Left lung (tissue), 14 donors: ENCODE measurements at regions of chr11 and their contacts with region 1.

Region 1: DNA sequence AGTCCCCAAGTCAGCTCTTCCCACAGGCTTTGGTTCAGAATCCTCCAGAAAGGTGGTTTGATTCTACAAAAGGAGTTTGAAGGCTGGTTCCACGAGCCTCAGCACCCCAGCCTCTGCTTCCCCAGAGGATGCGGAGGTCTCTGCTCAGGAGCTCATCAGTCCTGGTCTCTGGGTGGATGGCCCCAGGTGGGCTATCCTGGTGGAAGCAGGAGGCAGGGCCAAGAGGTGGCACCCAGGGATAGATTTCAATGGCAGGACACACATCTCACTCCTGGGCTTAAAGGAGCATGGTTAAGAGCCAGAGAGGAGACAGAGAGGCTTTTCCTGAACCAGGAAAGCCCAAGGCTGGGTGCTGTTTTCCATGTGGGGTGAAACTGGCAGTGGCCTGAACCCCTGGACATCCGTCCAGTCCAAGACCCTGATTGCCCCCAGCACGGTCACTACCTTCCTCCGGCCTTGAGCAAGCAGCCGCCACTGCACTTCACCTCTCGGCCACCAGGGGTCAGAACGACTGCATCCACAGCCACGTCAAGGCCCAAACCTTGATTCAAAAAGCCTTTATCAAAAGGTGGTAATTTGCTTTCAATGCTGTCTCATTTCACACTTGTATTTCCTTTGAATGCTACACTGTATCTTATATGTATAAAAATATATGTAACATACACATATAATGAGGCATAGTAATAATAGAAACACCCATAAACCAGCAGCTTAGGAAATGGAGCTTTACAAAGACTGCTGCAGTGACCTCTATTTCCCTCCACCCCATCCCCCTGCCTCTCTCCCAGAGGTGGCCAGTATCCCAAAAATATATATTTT is 19.3 kb upstream of the FXYD2 start:
- DNase-seq: peak; percentile 65 to 94 (median 76)
- ATAC-seq: peak; percentile 87
- H3K4me3 ChIP-seq: no peak overlapping the region
- H3K27ac ChIP-seq: no peak overlapping the region
- H3K4me1 ChIP-seq: peaks cover 0 to 36% of the 10 kb centered on the region in 2 donors
- H3K27me3 ChIP-seq: no peaks in the 10 kb centered on the region
- CTCF ChIP-seq: peak; percentile 99 to 100

Region 2: GRCh38 chr11:117807482-117808327 is 36.2 kb before region 1 on chr11:
- intact Hi-C with region 1: no loop called
- DNase-seq: peak in 3 of 4 donors; percentile 67 to 88 (median 86)
- ATAC-seq: peak; percentile 84
- H3K4me3 ChIP-seq: no peak overlapping the region
- H3K27ac ChIP-seq: no peak overlapping the region
- H3K4me1 ChIP-seq: peaks cover 0 to 43% of the 10 kb centered on the region in 2 donors
- H3K27me3 ChIP-seq: no peaks in the 10 kb centered on the region
- CTCF ChIP-seq: peak; percentile 91 to 94

Region 3: DNA sequence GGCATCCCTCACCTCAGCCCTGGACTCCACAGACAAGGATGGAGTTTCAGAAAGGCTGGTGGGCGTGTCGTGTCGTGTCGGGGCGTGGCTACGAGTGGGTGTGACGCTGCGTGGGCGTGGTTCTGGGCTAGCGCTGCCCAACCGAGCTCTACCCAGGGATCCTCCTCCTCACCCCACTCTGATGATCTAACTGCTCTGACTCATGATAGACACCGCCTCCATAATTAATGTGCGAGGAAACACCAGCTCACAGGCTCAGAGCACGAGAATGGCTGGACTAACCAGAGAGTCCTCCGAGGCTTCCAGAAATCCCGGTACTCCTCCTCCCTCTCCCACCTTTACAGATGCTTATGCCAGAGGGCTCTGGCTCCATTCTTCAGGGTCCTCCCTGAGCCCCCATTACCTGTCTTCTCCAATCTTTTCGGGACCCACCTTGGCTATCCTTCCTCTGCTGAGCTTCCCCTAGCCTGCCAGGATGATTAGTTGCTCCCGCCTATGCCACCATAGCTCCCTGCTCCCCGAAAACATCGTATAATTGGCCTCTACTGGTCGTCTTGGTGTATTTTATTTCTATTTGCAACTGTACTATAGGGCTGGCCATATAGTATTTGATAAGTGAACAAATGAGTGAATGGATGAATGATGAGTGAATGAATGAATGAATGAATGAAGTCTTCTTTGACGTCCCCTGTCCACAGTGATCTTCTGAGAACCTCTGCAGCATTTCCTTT is 63.5 kb after region 1 on chr11:
- intact Hi-C with region 1: loop called in 1 of 2 experiments (anchors 10 kb)
- DNase-seq: peak in 3 of 4 donors; percentile 59 to 89 (median 79)
- ATAC-seq: peak; percentile 93
- H3K4me3 ChIP-seq: no peak overlapping the region
- H3K27ac ChIP-seq: no peak overlapping the region
- H3K4me1 ChIP-seq: peaks cover 2 to 4% of the 10 kb centered on the region in 2 donors
- H3K27me3 ChIP-seq: no peaks in the 10 kb centered on the region
- CTCF ChIP-seq: no peak

Region 4: DNA sequence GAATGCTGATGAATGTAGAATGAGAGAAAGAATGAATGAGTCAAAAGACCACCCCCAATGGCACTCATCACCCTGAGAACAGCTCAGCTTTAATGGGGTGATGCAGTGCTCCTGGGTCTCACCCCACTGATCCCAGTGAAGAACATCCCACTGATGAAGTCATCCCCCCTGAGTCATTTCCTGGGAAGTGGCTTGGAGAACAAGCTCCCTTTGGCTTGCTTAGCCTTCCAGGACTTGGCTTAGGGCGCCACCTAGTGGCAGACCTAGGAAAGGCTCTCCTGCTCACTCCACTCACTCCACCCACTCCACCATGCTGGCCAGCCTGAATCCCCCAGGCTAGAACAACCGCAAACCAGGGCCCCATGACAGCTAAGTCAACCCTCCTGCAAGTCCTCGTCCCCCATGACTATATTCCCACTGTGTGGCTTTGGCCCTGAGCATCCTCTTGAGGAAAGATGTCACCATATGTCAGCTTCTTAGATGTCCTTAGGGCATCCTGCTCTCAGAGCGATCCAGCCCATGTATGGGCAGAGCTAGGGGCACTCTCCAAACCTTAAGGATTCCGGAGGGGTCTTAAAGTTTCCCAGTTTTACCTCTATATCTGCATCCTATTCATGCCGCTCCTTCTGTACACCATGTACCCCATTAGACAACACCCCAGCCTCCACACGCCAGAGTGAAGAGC is 103.1 kb after region 1 on chr11:
- intact Hi-C with region 1: loop called in 1 of 2 experiments (anchors 5 kb)
- DNase-seq: peak; percentile 85 to 94 (median 90)
- ATAC-seq: peak; percentile 97
- H3K4me3 ChIP-seq: no peak overlapping the region
- H3K27ac ChIP-seq: no peak overlapping the region
- H3K4me1 ChIP-seq: peaks cover 0 to 55% of the 10 kb centered on the region in 2 donors
- H3K27me3 ChIP-seq: no peaks in the 10 kb centered on the region
- CTCF ChIP-seq: peak; percentile 97 to 99

Region 5: DNA sequence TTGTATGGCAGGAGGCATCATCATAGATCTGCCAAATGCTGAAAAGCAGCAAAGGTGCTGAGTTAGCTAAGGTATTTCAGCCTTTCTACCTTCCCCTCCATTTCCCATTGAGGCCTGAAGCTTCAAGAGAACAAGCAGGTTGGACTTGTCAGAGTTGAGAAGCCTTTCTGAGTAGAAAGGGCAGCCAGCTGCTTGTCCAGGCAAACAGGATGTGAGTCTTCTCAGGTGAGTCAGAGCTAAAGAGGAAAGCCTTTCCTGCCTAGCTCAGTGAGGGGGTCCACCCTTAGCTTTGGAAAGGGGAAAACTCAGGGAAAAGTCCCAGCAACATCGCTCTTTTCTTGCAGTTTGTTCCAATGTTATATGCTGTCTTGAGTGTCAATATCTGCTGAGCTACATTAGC is 433.4 kb after region 1 on chr11:
- intact Hi-C with region 1: no loop called
- DNase-seq: no peak
- ATAC-seq: peak; percentile 63
- H3K4me3 ChIP-seq: no peak overlapping the region
- H3K27ac ChIP-seq: peak overlapping the region; percentile 19 to 50
- H3K4me1 ChIP-seq: peaks cover 10 to 24% of the 10 kb centered on the region in 2 donors
- H3K27me3 ChIP-seq: no peaks in the 10 kb centered on the region
- CTCF ChIP-seq: no peak

Region 6: DNA sequence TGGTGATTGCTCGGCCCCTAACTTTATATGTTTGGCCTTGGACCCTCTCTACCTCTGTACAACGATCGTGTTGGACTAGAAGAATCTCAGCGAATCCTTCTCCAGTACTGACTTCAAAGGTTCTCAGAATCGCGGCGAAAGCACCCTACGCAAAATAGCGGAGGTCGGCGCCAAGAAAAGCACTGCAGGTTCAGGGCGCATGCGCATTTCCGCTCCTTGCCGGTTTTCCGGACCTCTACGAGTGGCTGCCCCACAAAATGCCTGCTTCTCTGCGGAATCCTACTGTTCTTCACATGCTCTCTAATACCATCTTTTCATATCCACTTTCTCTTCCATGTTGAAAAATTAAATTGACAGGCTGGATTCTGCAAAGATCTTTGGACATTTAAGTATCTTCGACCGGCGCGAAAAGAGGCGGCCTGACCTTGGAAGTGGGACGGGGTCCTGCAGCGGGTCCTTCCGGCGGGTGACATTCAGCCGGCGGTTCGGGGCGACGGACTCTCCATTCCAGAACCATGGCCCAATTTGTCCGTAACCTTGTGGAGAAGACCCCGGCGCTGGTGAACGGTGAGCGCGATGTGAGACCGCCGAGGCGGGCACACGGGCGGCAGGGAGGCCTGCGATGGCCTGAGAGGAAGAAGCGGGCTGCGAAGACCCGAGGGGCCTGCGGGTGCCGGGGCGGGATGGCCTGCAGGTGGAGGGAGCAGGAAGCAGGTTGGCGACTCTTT is 557.4 kb after region 1 on chr11 and contains the start of gene ATP5MG:
- intact Hi-C with region 1: no loop called
- DNase-seq: peak; percentile 91 to 95 (median 92)
- ATAC-seq: peak; percentile 91
- H3K4me3 ChIP-seq: peak within 1 kb of the TSS; percentile 80 to 89
- H3K27ac ChIP-seq: peak within 1 kb of the TSS; percentile 84 to 91
- H3K4me1 ChIP-seq: peaks cover 14 to 42% of the 10 kb centered on the region in 2 donors
- H3K27me3 ChIP-seq: no peaks in the 10 kb centered on the region
- CTCF ChIP-seq: no peak
- polyA plus RNA-seq, gene ATP5MG: 369 to 408 (median 392) TPM